Calu3 (cell line): ENCODE measurements at regions of chr14 and their contacts with region 1.

Region 1: GRCh38 chr14:77812028-77812427 is 12.1 kb downstream of the ADCK1 start:
- DNase-seq: no peak
- H3K4me3 Mint-ChIP-seq: no peak overlapping the region
- H3K27ac Mint-ChIP-seq: no peak overlapping the region
- H3K4me1 Mint-ChIP-seq: no peaks in the 10 kb centered on the region
- H3K27me3 Mint-ChIP-seq: no peaks in the 10 kb centered on the region
- CTCF ChIP-seq: no peak

Region 2: DNA sequence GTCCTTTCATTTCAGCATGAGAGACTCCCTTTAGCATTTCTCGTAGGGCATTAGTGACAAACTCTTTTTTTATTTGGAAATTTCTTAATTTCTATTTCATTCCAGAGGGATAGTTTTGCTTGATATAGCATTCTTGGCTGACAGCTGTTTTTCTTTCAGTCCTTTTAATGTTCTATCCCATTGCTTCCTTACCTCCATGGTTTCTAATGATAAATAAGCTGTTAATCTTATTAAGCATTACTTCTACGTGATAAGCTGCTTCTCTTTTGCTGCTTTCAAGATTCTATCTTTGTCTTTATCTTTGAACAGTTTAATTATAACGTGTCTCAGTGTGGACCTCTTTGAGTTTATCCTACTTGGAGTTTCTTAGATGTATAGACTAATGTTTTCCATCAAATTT is 642.0 kb before region 1 on chr14:
- CTCF ChIA-PET with region 1: no interaction called
- intact Hi-C with region 1: loop called (anchors 5 kb)
- DNase-seq: no peak
- H3K4me3 Mint-ChIP-seq: no peak overlapping the region
- H3K27ac Mint-ChIP-seq: no peak overlapping the region
- H3K4me1 Mint-ChIP-seq: no peaks in the 10 kb centered on the region
- H3K27me3 Mint-ChIP-seq: peaks cover 45% of the 10 kb centered on the region
- CTCF ChIP-seq: no peak

Region 3: GRCh38 chr14:77660754-77661153 is 151.3 kb before region 1 on chr14:
- CTCF ChIA-PET with region 1: no interaction called
- intact Hi-C with region 1: loop called (anchors 1 kb)
- DNase-seq: no peak
- H3K4me3 Mint-ChIP-seq: no peak overlapping the region
- H3K27ac Mint-ChIP-seq: no peak overlapping the region
- H3K4me1 Mint-ChIP-seq: no peaks in the 10 kb centered on the region
- H3K27me3 Mint-ChIP-seq: no peaks in the 10 kb centered on the region
- CTCF ChIP-seq: no peak

Region 4: DNA sequence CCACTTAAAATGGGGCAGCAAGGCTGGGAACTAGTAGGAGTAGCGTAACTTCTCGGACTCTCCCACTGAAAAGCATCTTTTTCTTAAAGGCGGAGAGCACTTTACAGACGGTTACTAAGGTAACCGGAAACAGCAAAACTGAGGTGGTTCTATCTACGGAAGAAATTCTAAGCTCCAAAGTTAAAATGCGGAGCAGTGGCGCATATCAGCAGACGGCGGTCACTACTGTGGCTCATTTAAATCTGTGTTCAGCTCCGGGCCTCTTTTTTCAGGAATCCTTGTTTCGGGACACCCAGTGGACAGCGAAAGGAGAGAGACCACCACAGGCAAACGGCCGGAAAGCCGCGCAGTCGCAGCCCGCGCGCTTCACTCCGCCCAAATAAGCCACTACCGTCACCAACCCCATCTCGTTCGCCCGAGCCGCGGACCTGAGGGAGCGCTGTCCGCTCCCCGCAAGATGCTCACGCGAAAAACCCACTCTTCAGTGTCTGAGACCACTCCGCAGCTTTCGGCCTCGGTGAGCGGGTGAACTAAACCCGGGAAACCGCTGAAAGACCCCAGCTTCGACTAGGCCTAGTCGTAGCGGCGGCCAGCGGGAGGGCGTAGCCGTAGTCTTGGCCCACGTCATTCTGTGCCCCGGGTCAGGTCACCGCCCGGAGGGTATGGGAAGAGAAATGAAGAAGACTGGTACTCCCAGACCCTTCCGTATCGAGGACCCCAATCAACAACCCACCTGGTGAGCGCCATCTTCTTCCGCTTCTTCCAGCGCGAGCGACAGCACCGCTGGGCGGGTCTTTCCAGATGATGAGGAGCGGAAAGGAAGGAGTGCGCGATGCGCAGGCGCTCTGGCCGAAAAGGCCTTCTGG is 51.4 kb before region 1 on chr14 and contains the start of gene SNW1:
- CTCF ChIA-PET with region 1: interaction called, 5 read pairs
- intact Hi-C with region 1: loop called (anchors 1 kb)
- DNase-seq: peak; percentile 88
- H3K4me3 Mint-ChIP-seq: peak within 1 kb of the TSS; percentile 75
- H3K27ac Mint-ChIP-seq: peak within 1 kb of the TSS; percentile 80
- H3K4me1 Mint-ChIP-seq: peaks cover 17% of the 10 kb centered on the region
- H3K27me3 Mint-ChIP-seq: peaks cover 9% of the 10 kb centered on the region
- CTCF ChIP-seq: no peak
- total RNA-seq, gene SNW1: 97.8 and 102 TPM in 2 replicates

Region 5: DNA sequence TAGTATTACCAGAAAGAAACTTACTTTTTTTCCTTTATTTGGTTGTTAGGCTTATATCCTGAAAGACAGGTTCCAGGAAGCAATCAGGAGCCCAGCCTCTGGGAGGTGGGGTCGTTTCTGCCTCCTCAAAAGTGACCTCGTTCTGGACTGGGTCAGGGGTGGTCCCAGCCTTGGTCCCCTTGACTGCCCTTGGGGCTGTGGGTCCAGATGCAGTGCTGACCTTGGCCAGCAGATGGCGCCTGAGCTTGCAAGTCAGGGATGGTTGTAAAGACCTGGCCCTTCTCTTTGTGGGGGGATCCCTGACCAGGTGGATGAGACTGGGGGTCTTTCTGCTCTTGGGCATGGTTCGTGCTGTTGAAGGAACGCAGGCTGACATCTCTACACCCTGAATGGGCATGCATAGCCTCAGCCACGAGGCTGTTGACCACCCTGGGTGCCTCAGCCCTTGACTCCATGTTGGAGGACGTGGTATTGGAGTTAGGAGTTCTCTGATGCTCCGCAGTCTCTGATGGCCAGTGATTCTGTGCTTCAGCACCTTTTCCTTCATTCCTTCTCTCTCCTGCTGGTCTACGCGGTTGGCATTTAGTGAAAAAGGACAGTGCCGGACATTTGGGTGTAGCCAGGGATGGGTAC is 50.2 kb after region 1 on chr14:
- CTCF ChIA-PET with region 1: no interaction called
- intact Hi-C with region 1: no loop called
- DNase-seq: peak; percentile 80
- H3K4me3 Mint-ChIP-seq: no peak overlapping the region
- H3K27ac Mint-ChIP-seq: no peak overlapping the region
- H3K4me1 Mint-ChIP-seq: peaks cover 32% of the 10 kb centered on the region
- H3K27me3 Mint-ChIP-seq: no peaks in the 10 kb centered on the region
- CTCF ChIP-seq: peak; percentile 87